ENCODE measurements at regions of chr1 and their contacts with region 1.

Region 1: DNA sequence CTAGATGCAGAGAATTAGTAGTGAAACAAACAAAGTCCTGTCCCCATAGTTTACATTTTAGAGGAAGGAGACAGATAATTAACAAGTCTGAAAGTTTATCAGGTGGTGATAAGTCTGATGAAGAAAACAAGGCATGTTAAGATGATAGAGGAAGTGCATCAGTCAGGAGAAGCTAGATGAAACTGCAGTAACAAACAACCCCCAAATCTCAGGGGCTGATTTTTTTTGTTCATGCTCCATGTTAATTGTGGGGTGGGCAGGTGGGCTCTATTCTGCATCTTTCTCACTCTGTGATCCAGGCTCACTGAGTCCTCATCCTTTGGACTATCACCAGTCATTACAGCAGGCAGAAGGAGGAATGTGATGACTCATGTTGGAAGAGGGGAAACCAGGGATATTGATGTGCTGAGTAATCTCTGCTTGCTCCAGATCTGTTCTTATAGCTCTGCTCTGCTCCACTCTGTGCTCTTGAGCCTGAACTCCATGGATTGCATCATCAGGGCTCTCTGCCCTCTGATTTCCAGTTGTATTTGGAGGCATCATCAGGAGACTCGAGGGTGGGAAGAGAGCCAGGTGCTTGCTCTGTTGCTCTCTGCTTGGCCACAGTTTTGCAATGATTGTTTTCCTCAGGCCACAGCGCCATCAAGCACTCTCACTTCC is 166.9 kb downstream of the IER5 start:
- DNase-seq: peak; percentile 96
- H3K4me3 ChIP-seq: no peak overlapping the region
- H3K27ac ChIP-seq: no peak overlapping the region
- H3K4me1 ChIP-seq: peaks cover 34% of the 10 kb centered on the region
- H3K27me3 ChIP-seq: no peaks in the 10 kb centered on the region
- CTCF ChIP-seq: no peak

Region 2: GRCh38 chr1:182215764-182216163 is 960.4 kb after region 1 on chr1:
- CTCF ChIA-PET with region 1: no interaction called
- dilution Hi-C with region 1: no loop called
- in situ Hi-C with region 1: no loop called
- intact Hi-C with region 1: loop called (anchors 5 kb)
- DNase-seq: no peak
- H3K4me3 ChIP-seq: no peak overlapping the region
- H3K27ac ChIP-seq: no peak overlapping the region
- H3K4me1 ChIP-seq: peaks cover 28% of the 10 kb centered on the region
- H3K27me3 ChIP-seq: no peaks in the 10 kb centered on the region
- CTCF ChIP-seq: no peak

Measured in mammary epithelial cell (primary cell).